Heart right ventricle (tissue), 16 donors: ENCODE measurements at regions of chr2 and their contacts with region 1.

Region 1: GRCh38 chr2:158745044-158745865 is 49.9 kb upstream of the DAPL1 start:
- DNase-seq: peak in 1 of 2 donors; percentile 62
- ATAC-seq: peak; percentile 40 to 80 (median 66)
- H3K4me3 ChIP-seq: no peak overlapping the region
- H3K27ac ChIP-seq: peak overlapping the region in 5 of 10 donors; percentile 18 to 65 (median 36)
- H3K4me1 ChIP-seq: peaks cover 15 to 60% (median 52%) of the 10 kb centered on the region in 9 donors
- H3K27me3 ChIP-seq: peaks cover 0 to 4% (median 0%) of the 10 kb centered on the region in 7 donors
- CTCF ChIP-seq: peak; percentile 27 to 71 (median 57)

Region 2: DNA sequence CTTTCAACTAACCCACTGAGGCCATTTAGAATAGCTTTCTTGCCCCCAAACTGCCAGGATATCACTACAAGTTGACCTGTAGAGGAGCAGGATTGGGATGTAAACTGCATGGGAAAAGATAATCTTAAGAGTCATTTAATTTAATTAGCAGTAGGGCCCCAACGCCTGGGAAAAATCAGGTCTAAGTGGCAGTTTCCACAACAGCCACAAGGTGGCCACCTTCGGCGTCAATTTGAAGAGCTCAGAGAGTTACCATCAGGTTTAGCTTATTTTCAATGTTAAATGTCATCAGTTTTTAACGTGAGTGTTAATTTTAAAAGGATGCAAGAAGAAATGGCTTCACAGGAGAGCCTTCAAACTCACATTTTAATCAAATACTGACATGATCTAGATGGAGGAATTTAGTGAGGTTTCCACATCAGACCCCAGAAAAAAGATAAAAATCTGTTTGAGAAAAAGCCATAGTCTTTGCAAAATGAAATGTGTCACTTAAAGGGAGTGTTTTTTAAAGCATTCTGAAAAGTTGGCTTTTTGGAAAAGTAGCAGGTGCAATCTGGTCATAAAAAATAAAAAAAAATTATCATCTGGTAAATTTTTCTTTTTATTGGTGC is 720.9 kb before region 1 on chr2:
- intact Hi-C with region 1: loop called in 8 of 10 experiments (anchors 1 to 10 kb)
- DNase-seq: peak; percentile 30 to 38
- ATAC-seq: peak in 1 of 8 donors; percentile 49
- H3K4me3 ChIP-seq: no peak overlapping the region
- H3K27ac ChIP-seq: no peak overlapping the region
- H3K4me1 ChIP-seq: no peaks in the 10 kb centered on the region
- H3K27me3 ChIP-seq: no peaks in the 10 kb centered on the region
- CTCF ChIP-seq: peak; percentile 73 to 90 (median 85)

Region 3: GRCh38 chr2:158179660-158180059 is 565.6 kb before region 1 on chr2:
- intact Hi-C with region 1: loop called in 8 of 10 experiments (anchors 5 to 10 kb)
- DNase-seq: no peak
- ATAC-seq: peak in 6 of 8 donors; percentile 23 to 75 (median 51)
- H3K4me3 ChIP-seq: no peak overlapping the region
- H3K27ac ChIP-seq: no peak overlapping the region
- H3K4me1 ChIP-seq: peaks cover 0 to 18% (median 4%) of the 10 kb centered on the region in 9 donors
- H3K27me3 ChIP-seq: peaks cover 0 to 3% (median 0%) of the 10 kb centered on the region in 7 donors
- CTCF ChIP-seq: peak in 7 of 9 donors; percentile 44 to 66 (median 60)

Region 4: GRCh38 chr2:158464426-158465281 is 280.6 kb before region 1 on chr2:
- intact Hi-C with region 1: loop called in 9 of 10 experiments (anchors 5 to 10 kb)
- DNase-seq: no peak
- ATAC-seq: no peak
- H3K4me3 ChIP-seq: no peak overlapping the region
- H3K27ac ChIP-seq: no peak overlapping the region
- H3K4me1 ChIP-seq: peaks cover 0 to 39% (median 14%) of the 10 kb centered on the region in 9 donors
- H3K27me3 ChIP-seq: no peaks in the 10 kb centered on the region
- CTCF ChIP-seq: peak; percentile 17 to 58 (median 46)

Region 5: DNA sequence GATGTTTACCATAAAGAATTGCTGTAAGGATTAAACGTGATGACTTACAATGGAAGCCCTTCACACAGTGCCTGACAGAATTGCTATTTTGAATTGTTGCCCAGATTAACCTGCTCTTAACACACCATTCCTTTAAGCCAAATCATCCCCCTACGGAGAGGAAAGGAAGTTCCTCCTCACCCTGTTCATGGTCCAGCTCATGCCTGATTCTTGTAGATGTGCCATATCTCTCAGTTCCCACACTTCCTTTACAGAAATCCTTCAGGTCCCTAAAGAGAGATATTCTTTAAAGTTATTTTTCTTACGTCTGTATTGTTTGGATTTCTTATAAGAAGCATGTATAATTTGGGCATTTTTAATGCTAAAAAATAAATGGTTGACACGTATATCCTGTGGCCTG is 77.7 kb before region 1 on chr2:
- intact Hi-C with region 1: loop called in 4 of 10 experiments (anchors 5 to 10 kb)
- DNase-seq: no peak
- ATAC-seq: peak; percentile 42 to 79 (median 64)
- H3K4me3 ChIP-seq: no peak overlapping the region
- H3K27ac ChIP-seq: peak overlapping the region in 7 of 10 donors; percentile 28 to 77 (median 62)
- H3K4me1 ChIP-seq: peaks cover 3 to 66% (median 36%) of the 10 kb centered on the region in 9 donors
- H3K27me3 ChIP-seq: no peaks in the 10 kb centered on the region
- CTCF ChIP-seq: no peak